Activated CD4-positive, alpha-beta T cell treated with anti-CD3 and anti-CD28 coated beads for 36 hours (primary cell): ENCODE measurements at regions of chr18 and their contacts with region 1.

Region 1: GRCh38 chr18:3645384-3646156 is 195.6 kb downstream of the TGIF1 start:
- DNase-seq: no peak
- ATAC-seq: no peak
- H3K4me3 Mint-ChIP-seq: no peak overlapping the region
- H3K27ac Mint-ChIP-seq: no peak overlapping the region
- H3K4me1 Mint-ChIP-seq: peaks cover 40% of the 10 kb centered on the region
- H3K27me3 Mint-ChIP-seq: no peaks in the 10 kb centered on the region

Region 2: GRCh38 chr18:3177902-3178687 is 467.5 kb before region 1 on chr18:
- CTCF ChIA-PET with region 1: no interaction called
- POLR2A ChIA-PET with region 1: no interaction called
- intact Hi-C with region 1: no loop called
- DNase-seq: peak; percentile 42
- ATAC-seq: peak; percentile 68
- H3K4me3 Mint-ChIP-seq: no peak overlapping the region
- H3K27ac Mint-ChIP-seq: peak overlapping the region; percentile 55
- H3K4me1 Mint-ChIP-seq: no peaks in the 10 kb centered on the region
- H3K27me3 Mint-ChIP-seq: no peaks in the 10 kb centered on the region

Region 3: GRCh38 chr18:3541549-3542386 is 103.8 kb before region 1 on chr18:
- CTCF ChIA-PET with region 1: no interaction called
- POLR2A ChIA-PET with region 1: no interaction called
- intact Hi-C with region 1: loop called in 1 of 2 experiments (anchors 1 kb)
- DNase-seq: peak; percentile 65
- ATAC-seq: peak; percentile 96
- H3K4me3 Mint-ChIP-seq: peak overlapping the region; percentile 16
- H3K27ac Mint-ChIP-seq: peak overlapping the region; percentile 74
- H3K4me1 Mint-ChIP-seq: peaks cover 32% of the 10 kb centered on the region
- H3K27me3 Mint-ChIP-seq: peaks cover 2% of the 10 kb centered on the region

Region 4: GRCh38 chr18:3604498-3605408 is 40.8 kb before region 1 on chr18:
- CTCF ChIA-PET with region 1: no interaction called
- POLR2A ChIA-PET with region 1: interaction called, 3 read pairs
- intact Hi-C with region 1: loop called (anchors 1 kb)
- DNase-seq: peak; percentile 59
- ATAC-seq: peak; percentile 69
- H3K4me3 Mint-ChIP-seq: no peak overlapping the region
- H3K27ac Mint-ChIP-seq: no peak overlapping the region
- H3K4me1 Mint-ChIP-seq: peaks cover 11% of the 10 kb centered on the region
- H3K27me3 Mint-ChIP-seq: no peaks in the 10 kb centered on the region

Region 5: DNA sequence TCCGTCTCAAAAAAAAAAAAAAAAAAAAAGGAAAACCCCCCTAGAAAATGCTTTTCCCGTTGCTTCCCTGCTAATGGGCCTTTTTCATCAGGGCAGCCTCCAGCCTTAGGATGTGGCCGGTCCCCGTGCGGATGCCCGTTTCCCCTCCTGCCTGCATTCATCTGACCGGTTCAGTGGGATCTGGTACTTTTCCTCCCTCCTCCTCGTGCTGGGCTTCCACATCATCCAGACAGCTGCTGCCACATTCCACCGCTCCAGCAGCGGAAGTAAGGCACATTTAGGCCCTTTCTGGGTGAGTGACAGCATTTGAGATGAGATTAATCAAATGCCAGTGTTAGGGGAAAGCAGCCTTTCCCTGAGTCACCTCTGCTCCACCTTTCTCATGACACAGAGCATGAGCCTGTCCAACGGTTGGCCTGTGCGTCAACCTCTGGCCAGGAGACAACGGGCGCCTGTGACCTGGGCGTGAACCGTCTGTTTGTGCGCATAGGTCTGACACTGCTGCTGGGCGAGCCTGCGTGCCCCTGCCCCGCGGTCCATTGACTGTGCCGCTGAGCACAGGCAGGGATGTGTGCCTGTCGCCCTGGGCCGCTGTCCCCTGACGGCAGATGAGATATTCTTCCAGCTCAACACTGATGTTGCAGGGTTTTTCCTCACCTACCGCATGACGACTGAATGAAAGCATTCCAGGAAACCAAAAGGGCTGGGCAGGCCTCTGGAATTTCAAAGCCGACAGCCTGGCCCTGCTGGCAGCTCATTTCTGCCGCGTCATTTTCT is 21.6 kb before region 1 on chr18:
- CTCF ChIA-PET with region 1: interaction called, 4 read pairs
- POLR2A ChIA-PET with region 1: no interaction called
- intact Hi-C with region 1: loop called (anchors 1 to 2 kb)
- DNase-seq: peak; percentile 68
- ATAC-seq: peak; percentile 50
- H3K4me3 Mint-ChIP-seq: peak overlapping the region; percentile 42
- H3K27ac Mint-ChIP-seq: peak overlapping the region; percentile 91
- H3K4me1 Mint-ChIP-seq: peaks cover 39% of the 10 kb centered on the region
- H3K27me3 Mint-ChIP-seq: no peaks in the 10 kb centered on the region